Ovary (tissue), 10 donors: ENCODE measurements at regions of chr1 and their contacts with region 1.

Region 1: GRCh38 chr1:176691251-176692228 is 228.6 kb downstream of the PAPPA2 start:
- DNase-seq: no peak
- H3K4me3 ChIP-seq: no peak overlapping the region
- H3K27ac ChIP-seq: no peak overlapping the region
- H3K4me1 ChIP-seq: no peaks in the 10 kb centered on the region
- H3K27me3 ChIP-seq: no peaks in the 10 kb centered on the region
- CTCF ChIP-seq: peak in 1 of 3 donors; percentile 13
- EP300 ChIP-seq: no peak
- POLR2A ChIP-seq: no peak

Region 2: DNA sequence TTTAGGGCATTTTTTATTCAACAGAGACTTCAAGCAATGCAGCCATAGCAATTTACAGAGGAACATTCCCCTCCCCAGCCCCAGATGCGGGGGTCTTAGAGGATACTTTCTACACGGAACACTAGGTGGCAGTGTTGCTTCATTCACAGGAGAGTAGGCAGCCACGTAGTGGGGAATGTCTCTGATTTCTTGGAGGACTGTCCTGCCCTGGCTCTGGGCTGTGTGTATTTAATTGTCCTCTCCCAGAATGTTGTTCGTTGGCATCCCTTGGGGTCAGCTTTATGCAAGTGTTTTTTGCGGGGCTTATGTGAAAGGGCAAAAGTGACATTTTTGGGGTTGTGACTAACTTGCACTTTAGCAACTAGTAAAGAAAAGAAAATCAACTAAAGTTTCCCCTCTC is 131.7 kb before region 1 on chr1:
- intact Hi-C with region 1: loop called in 1 of 4 experiments (anchors 5 kb)
- DNase-seq: peak in 1 of 5 donors; percentile 19
- H3K4me3 ChIP-seq: no peak overlapping the region
- H3K27ac ChIP-seq: no peak overlapping the region
- H3K4me1 ChIP-seq: no peaks in the 10 kb centered on the region
- H3K27me3 ChIP-seq: no peaks in the 10 kb centered on the region
- CTCF ChIP-seq: peak in 1 of 3 donors; percentile 35
- EP300 ChIP-seq: no peak
- POLR2A ChIP-seq: no peak

Region 3: GRCh38 chr1:176837708-176838107 is 146.2 kb after region 1 on chr1:
- intact Hi-C with region 1: no loop called
- DNase-seq: no peak
- H3K4me3 ChIP-seq: no peak overlapping the region
- H3K27ac ChIP-seq: no peak overlapping the region
- H3K4me1 ChIP-seq: no peaks in the 10 kb centered on the region
- H3K27me3 ChIP-seq: no peaks in the 10 kb centered on the region
- CTCF ChIP-seq: no peak
- EP300 ChIP-seq: no peak
- POLR2A ChIP-seq: no peak